Panc1 (cell line): ENCODE measurements at regions of chr17 and their contacts with region 1.

Region 1: DNA sequence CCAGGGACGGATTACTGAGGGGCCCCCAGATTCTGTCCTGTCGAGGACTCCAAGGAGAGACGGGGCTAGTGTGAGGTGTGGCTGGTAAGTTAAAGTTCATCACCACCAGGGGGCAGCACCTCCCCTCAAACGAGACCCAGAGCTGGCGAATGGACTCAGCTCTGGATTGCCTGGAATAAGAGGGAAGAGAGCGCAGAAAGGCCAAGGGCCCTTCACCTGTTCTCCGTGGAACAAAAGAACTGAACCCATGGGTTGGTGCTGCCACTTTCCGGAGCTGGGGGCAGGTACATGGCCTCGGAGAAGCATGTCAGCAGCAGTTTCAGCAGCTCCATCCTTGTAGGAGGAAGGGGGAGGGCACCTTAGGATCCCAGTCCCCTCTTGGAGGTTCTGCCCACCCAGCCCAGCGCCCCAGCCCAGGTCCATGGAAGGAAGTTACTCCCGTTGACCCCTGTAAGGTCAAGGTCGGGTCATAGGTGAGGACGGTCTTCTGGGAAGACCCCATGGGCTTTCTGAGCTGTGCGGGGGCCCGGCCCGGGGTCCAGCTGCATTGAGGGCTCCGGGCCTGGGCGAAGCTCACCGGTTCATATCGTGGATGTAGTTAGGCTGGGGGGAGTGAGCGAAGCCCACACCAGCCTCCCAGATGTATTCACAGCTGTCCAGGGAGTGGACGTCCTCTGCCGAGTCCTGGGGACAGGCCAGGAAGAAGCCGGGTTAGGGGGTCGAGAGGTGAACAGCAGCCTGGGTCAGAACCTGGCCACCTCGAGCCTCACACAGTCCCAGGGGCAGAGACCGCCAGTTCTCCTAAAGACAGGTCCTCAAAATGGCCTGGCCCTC is 10.7 kb downstream of the HID1 start:
- DNase-seq: no peak
- ATAC-seq: peak; percentile 82
- H3K4me3 ChIP-seq: no peak overlapping the region
- H3K27ac ChIP-seq: no peak overlapping the region
- H3K4me1 ChIP-seq: peaks cover 3% of the 10 kb centered on the region; the same call in 1 of the 2 replicates
- H3K27me3 ChIP-seq: no peaks in the 10 kb centered on the region
- CTCF ChIP-seq: peak; percentile 81

Region 2: DNA sequence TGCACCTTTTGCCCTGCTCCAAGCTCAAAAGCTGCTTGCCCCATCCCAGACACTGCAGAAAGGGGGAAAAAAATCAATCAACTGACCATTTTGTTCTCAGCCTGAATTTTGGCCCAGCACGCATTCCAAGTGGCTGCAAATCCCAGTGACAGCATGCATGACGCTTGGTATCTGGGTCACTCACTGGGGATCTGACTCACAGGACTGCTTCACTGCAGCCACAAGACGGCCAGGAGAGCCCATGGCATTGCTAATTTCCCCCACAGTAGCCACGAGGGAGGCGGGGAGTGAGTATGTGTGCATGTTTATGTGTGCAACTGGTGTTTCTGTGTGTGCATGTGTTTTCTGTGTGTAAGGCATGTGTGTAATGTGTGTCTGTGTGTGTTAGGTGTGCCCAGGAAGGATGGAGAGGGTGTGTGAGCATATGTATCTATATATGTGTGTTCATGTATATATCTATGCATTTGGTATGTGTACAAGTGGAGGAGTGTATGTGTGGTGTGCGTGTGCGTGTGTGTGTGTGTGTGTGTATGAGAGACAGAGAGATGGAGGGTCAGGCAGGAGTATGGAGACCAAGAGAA is 1351.5 kb before region 1 on chr17:
- CTCF ChIA-PET with region 1: no interaction called
- POLR2A ChIA-PET with region 1: no interaction called
- in situ Hi-C with region 1: no loop called
- intact Hi-C with region 1: no loop called
- DNase-seq: no peak
- ATAC-seq: no peak
- H3K4me3 ChIP-seq: no peak overlapping the region
- H3K27ac ChIP-seq: no peak overlapping the region
- H3K4me1 ChIP-seq: no peaks in the 10 kb centered on the region
- H3K27me3 ChIP-seq: no peaks in the 10 kb centered on the region; the same call in 1 of the 2 replicates
- CTCF ChIP-seq: no peak

Region 3: GRCh38 chr17:74873038-74873873 is 88.6 kb before region 1 on chr17:
- CTCF ChIA-PET with region 1: interaction called, 11 read pairs
- POLR2A ChIA-PET with region 1: no interaction called
- in situ Hi-C with region 1: no loop called
- intact Hi-C with region 1: no loop called
- DNase-seq: peak; percentile 98
- ATAC-seq: peak; percentile 97
- H3K4me3 ChIP-seq: peak overlapping the region; percentile 83 to 86
- H3K27ac ChIP-seq: peak overlapping the region; percentile 97
- H3K4me1 ChIP-seq: peaks cover 9% of the 10 kb centered on the region
- H3K27me3 ChIP-seq: no peaks in the 10 kb centered on the region
- CTCF ChIP-seq: no peak

Region 4: GRCh38 chr17:74892974-74893911 is 68.6 kb before region 1 on chr17 and contains the start of gene FADS6:
- CTCF ChIA-PET with region 1: no interaction called
- POLR2A ChIA-PET with region 1: no interaction called
- in situ Hi-C with region 1: no loop called
- intact Hi-C with region 1: no loop called
- DNase-seq: no peak
- ATAC-seq: peak; percentile 41
- H3K4me3 ChIP-seq: peak within 1 kb of the TSS; percentile 39 to 41
- H3K27ac ChIP-seq: no peak within 1 kb of the TSS
- H3K4me1 ChIP-seq: no peaks in the 10 kb centered on the region
- H3K27me3 ChIP-seq: peaks cover 12% of the 10 kb centered on the region
- CTCF ChIP-seq: no peak
- total RNA-seq, gene FADS6: not detected

Region 5: GRCh38 chr17:74949455-74950115 is 12.3 kb before region 1 on chr17:
- CTCF ChIA-PET with region 1: interaction called, 13 read pairs
- POLR2A ChIA-PET with region 1: interaction called, 3 read pairs
- in situ Hi-C with region 1: no loop called
- intact Hi-C with region 1: no loop called
- DNase-seq: no peak
- ATAC-seq: peak; percentile 51
- H3K4me3 ChIP-seq: no peak overlapping the region
- H3K27ac ChIP-seq: no peak overlapping the region
- H3K4me1 ChIP-seq: no peaks in the 10 kb centered on the region
- H3K27me3 ChIP-seq: no peaks in the 10 kb centered on the region
- CTCF ChIP-seq: no peak

Region 6: DNA sequence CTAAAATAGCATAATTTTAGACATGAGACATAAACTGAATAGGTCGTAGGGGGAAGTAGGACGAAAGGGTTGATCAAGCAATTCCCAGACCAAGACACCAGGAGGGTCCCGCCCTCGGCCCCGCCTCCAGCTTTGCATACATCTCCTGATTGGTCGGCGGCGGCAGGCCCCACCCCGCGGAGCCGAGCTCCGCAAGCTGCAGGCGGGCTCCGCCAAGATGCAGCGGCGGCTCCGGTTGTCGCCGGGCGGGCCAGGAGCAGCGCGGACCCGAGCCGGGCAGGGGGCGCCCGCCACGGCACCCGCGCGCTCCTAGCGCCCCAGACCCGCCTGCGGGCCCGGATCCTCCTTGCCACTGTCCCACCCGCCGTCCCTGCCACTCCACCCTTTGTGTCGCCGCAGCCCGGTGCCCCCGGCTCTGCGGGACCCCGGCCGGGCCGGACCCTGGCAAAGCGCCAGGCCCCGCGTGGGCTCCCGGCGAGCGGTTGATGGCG is 25.6 kb after region 1 on chr17 and contains the start of gene CDR2L:
- CTCF ChIA-PET with region 1: interaction called, 18 read pairs
- POLR2A ChIA-PET with region 1: no interaction called
- in situ Hi-C with region 1: no loop called
- intact Hi-C with region 1: no loop called
- DNase-seq: peak; percentile 65
- ATAC-seq: peak; percentile 96
- H3K4me3 ChIP-seq: peak within 1 kb of the TSS; percentile 73 to 74
- H3K27ac ChIP-seq: peak within 1 kb of the TSS; percentile 74
- H3K4me1 ChIP-seq: peaks cover 23% of the 10 kb centered on the region
- H3K27me3 ChIP-seq: no peaks in the 10 kb centered on the region
- CTCF ChIP-seq: no peak
- total RNA-seq, gene CDR2L: 32.0 TPM

Region 7: GRCh38 chr17:75012346-75013091 is 50.6 kb after region 1 on chr17 and contains the start of gene MRPL58:
- CTCF ChIA-PET with region 1: interaction called, 33 read pairs
- POLR2A ChIA-PET with region 1: interaction called, 5 read pairs
- in situ Hi-C with region 1: no loop called
- intact Hi-C with region 1: loop called (anchors 5 kb)
- DNase-seq: no peak
- ATAC-seq: peak; percentile 96
- H3K4me3 ChIP-seq: peak within 1 kb of the TSS; percentile 78 to 82
- H3K27ac ChIP-seq: peak within 1 kb of the TSS; percentile 78
- H3K4me1 ChIP-seq: peaks cover 21% of the 10 kb centered on the region
- H3K27me3 ChIP-seq: no peaks in the 10 kb centered on the region
- CTCF ChIP-seq: no peak
- total RNA-seq, gene MRPL58: 55.2 TPM